Astrocyte of the cerebellum (primary cell): ENCODE measurements at regions of chr10 and their contacts with region 1.

Region 1: DNA sequence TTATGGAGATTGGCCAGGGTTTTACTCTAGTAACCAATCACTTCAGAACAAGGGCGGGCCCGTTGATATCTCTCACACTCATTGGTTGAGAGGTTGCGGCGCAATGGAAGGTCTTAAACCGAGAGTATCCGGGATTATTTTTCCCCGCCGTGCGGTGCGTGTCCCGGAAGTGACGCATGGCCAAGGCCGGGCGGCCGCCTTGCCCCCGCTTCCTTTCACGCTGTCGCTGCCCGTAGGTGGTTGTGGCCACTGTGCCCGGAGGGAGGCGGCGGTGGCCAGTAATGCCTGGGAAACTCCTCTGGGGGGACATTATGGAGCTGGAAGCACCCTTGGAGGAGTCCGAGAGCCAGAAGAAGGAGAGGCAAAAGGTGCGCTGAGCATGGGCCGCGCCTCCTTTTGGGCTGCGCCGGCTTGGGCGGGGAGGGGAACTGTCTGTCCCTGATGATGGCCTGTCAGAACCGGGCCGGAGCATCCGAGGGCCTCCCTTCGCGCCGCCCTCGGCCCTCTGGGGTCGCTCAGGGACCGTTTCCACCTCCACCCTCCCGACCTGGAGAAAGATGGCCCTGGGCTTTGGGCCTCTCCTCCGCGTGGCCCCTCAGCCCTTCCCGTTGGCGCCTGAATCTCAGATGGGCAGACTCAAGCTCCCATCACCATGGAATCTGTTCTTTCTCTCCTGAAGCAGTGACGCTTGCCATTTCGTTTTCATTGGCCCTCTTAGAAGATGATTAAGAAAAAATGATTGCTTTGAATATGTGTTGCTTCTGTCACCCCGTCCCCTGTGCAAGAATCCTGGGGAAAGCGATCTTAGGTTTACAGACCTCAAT is at the start of gene DDX50:
- DNase-seq: peak; percentile 99
- H3K4me3 ChIP-seq: peak within 1 kb of the TSS; percentile 68
- CTCF ChIP-seq: no peak

Region 2: GRCh38 chr10:68752711-68753350 is 148.5 kb before region 1 on chr10:
- in situ Hi-C with region 1: loop called (anchors 25 kb)
- DNase-seq: no peak
- H3K4me3 ChIP-seq: no peak overlapping the region
- CTCF ChIP-seq: no peak

Region 3: GRCh38 chr10:68831961-68832459 is 69.3 kb before region 1 on chr10:
- in situ Hi-C with region 1: loop called (anchors 5 kb)
- DNase-seq: no peak
- H3K4me3 ChIP-seq: no peak overlapping the region
- CTCF ChIP-seq: no peak

Region 4: DNA sequence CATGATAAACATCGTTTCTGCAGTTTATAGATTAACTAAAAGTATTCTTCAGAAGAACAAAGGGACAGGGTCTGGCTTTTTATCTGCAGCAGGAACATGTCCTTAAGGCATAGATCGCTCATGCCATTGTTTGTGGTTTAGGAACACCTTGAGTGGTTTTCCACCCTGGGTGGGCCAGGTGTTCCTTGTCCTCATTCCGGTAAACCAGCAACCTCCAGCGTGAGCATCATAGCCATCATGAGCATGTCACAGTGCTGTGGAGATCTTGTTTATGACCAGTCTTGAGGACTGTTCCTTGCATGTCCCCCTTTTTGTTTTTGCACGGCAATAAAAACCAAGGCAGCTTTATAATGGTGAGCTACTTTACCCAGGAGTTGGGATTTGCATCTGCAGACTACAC is 40.1 kb before region 1 on chr10:
- in situ Hi-C with region 1: no loop called
- DNase-seq: no peak
- H3K4me3 ChIP-seq: no peak overlapping the region
- CTCF ChIP-seq: no peak